Activated CD4-positive, alpha-beta memory T cell treated with anti-CD3 and anti-CD28 coated beads for 36 hours (primary cell): ENCODE measurements at regions of chr4 and their contacts with region 1.

Region 1: GRCh38 chr4:185587427-185588161 is 52.3 kb upstream of the PDLIM3 start:
- DNase-seq: peak; percentile 87
- H3K4me3 Mint-ChIP-seq: peak overlapping the region; percentile 34
- H3K27ac Mint-ChIP-seq: peak overlapping the region; percentile 40
- H3K4me1 Mint-ChIP-seq: peaks cover 16% of the 10 kb centered on the region
- H3K27me3 Mint-ChIP-seq: peaks cover 41% of the 10 kb centered on the region

Region 2: DNA sequence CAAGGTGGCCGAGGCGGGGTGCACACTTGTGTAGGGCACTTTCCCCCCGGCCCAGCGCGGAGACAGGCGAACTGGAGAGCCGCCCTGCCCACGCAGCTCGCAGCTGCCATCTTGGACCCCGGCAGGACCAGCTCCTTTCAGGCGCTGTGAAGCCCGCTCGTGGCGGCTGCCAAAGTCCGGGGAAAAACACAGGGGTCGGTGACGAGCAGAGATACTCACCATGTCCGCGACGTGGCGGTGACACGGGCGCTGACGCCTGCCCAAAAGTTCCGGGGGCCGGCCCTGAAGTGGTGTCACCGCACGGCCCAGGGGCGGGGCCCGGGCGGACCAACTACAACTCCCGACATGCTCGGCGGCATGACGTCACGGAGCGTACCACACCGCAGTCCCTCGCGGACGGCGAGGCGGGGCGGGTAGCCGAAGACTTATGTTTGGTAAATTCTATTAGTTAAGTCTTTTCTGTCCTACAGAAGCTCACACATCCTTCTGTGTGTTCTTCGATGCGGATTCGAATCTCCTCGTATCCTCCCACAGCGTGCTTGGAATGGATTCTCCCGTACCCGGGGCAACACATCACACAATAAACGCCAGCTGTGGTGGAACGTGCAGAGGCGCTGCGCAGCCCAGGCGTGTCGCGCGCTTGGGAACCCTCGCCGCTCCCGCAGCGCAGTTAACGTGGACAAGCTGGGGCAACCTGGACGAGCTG is 161.8 kb before region 1 on chr4 and contains the start of gene UFSP2:
- CTCF ChIA-PET with region 1: no interaction called
- POLR2A ChIA-PET with region 1: no interaction called
- intact Hi-C with region 1: loop called (anchors 2 kb)
- DNase-seq: peak; percentile 90
- H3K4me3 Mint-ChIP-seq: peak within 1 kb of the TSS; percentile 83
- H3K27ac Mint-ChIP-seq: peak within 1 kb of the TSS; percentile 97
- H3K4me1 Mint-ChIP-seq: peaks cover 23% of the 10 kb centered on the region
- H3K27me3 Mint-ChIP-seq: no peaks in the 10 kb centered on the region
- total RNA-seq, gene UFSP2: 28.3 to 33.0 TPM

Region 3: DNA sequence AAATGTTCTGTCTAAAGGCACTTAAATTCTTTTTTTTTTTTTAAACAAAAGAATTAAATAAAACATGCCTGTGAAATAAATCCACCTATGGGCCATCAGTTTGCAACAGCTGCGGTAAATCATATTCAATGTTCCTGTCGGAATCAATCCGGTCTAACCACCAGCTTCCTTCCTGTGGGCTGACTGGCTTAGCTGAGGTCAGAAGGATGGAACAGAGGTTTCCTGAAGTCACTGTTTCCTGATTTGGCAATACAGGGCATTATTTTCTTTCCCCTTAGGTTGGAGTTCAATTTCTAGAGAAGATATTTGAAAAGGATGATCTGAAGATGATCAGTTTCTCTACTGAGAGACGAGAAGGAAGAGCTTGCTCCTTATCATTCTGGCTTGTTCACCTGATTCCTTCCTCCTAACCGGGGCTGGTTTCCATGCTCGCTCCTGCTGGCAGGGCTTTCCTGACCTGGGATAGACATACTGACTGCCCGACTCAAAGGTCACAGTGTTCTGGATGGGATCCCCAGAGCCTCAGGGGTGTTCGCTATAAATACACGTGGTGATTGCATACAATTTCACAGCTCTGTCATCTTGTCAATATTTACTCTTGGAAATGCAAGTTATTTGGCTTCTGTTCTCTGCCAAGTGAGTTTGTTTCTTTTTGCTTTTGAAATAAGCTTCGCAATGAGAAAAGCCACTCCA is 74.0 kb before region 1 on chr4:
- CTCF ChIA-PET with region 1: no interaction called
- POLR2A ChIA-PET with region 1: no interaction called
- intact Hi-C with region 1: no loop called
- DNase-seq: peak; percentile 22
- H3K4me3 Mint-ChIP-seq: no peak overlapping the region
- H3K27ac Mint-ChIP-seq: no peak overlapping the region
- H3K4me1 Mint-ChIP-seq: peaks cover 17% of the 10 kb centered on the region
- H3K27me3 Mint-ChIP-seq: peaks cover 43% of the 10 kb centered on the region

Region 4: GRCh38 chr4:185534866-185535611 is 52.6 kb before region 1 on chr4 and contains the start of gene PDLIM3:
- CTCF ChIA-PET with region 1: no interaction called
- POLR2A ChIA-PET with region 1: no interaction called
- intact Hi-C with region 1: no loop called
- DNase-seq: peak; percentile 14
- H3K4me3 Mint-ChIP-seq: peak within 1 kb of the TSS; percentile 33
- H3K27ac Mint-ChIP-seq: no peak within 1 kb of the TSS
- H3K4me1 Mint-ChIP-seq: peaks cover 6% of the 10 kb centered on the region
- H3K27me3 Mint-ChIP-seq: peaks cover 37% of the 10 kb centered on the region
- total RNA-seq, gene PDLIM3: not detected

Region 5: GRCh38 chr4:185566972-185567371 is 20.6 kb before region 1 on chr4:
- CTCF ChIA-PET with region 1: no interaction called
- POLR2A ChIA-PET with region 1: no interaction called
- intact Hi-C with region 1: loop called (anchors 1 kb)
- DNase-seq: no peak
- H3K4me3 Mint-ChIP-seq: no peak overlapping the region
- H3K27ac Mint-ChIP-seq: no peak overlapping the region
- H3K4me1 Mint-ChIP-seq: peaks cover 9% of the 10 kb centered on the region
- H3K27me3 Mint-ChIP-seq: peaks cover 15% of the 10 kb centered on the region

Region 6: GRCh38 chr4:185597532-185598188 is 10.1 kb after region 1 on chr4:
- CTCF ChIA-PET with region 1: interaction called, 20 read pairs
- POLR2A ChIA-PET with region 1: no interaction called
- intact Hi-C with region 1: no loop called
- DNase-seq: peak; percentile 78
- H3K4me3 Mint-ChIP-seq: no peak overlapping the region
- H3K27ac Mint-ChIP-seq: no peak overlapping the region
- H3K4me1 Mint-ChIP-seq: peaks cover 2% of the 10 kb centered on the region
- H3K27me3 Mint-ChIP-seq: peaks cover 19% of the 10 kb centered on the region

Region 7: GRCh38 chr4:185608185-185608584 is 20.6 kb after region 1 on chr4:
- CTCF ChIA-PET with region 1: no interaction called
- POLR2A ChIA-PET with region 1: no interaction called
- intact Hi-C with region 1: no loop called
- DNase-seq: no peak
- H3K4me3 Mint-ChIP-seq: no peak overlapping the region
- H3K27ac Mint-ChIP-seq: no peak overlapping the region
- H3K4me1 Mint-ChIP-seq: peaks cover 2% of the 10 kb centered on the region
- H3K27me3 Mint-ChIP-seq: peaks cover 3% of the 10 kb centered on the region